GM12878 (cell line): ENCODE measurements at regions of chr1 and their contacts with region 1.

Region 1: DNA sequence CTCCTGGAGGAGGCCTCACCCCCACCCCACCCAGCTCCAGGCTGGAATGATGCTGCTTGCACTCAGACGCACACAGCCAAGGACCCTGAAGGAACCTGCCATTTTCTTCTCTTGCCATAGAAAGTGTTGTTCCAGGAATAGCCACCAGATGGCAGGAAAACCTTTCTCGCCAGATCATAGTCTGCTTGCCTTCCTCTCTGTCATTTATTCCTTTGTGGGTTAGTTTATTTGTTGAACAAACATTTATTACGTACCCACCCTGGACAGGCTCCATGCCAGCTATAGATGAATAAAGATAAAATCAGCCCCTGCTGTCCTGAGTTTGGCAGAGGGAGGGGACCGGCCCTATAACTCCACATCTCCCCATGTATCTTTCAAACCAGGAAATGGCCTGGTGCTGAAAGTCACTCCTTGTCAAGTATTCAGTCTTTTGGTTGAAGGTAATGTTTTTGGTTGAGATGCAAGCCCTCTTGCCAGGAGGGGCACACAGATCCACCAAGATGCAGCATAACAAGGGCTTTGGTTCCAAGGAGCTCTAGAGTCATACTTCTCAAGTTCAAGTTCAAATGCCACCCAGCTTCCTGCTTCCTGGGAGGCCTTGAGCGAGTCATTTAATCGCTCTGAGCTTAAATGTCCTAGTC is 7.0 kb upstream of the KCNC4 start:
- DNase-seq: peak; percentile 17
- ATAC-seq: peak; percentile 84
- H3K4me3 ChIP-seq: no peak overlapping the region
- H3K27ac ChIP-seq: no peak overlapping the region
- H3K4me1 ChIP-seq: no peaks in the 10 kb centered on the region
- H3K27me3 ChIP-seq: peaks cover 0 to 2% of the 10 kb centered on the region in 2 experiments; a peak in 2 of 4 replicates
- CTCF ChIP-seq: peak; percentile 81 to 89 (median 81)
- EP300 ChIP-seq: no peak
- POLR2A ChIP-seq: no peak
- RAD21 ChIP-seq: peak; percentile 90

Region 2: DNA sequence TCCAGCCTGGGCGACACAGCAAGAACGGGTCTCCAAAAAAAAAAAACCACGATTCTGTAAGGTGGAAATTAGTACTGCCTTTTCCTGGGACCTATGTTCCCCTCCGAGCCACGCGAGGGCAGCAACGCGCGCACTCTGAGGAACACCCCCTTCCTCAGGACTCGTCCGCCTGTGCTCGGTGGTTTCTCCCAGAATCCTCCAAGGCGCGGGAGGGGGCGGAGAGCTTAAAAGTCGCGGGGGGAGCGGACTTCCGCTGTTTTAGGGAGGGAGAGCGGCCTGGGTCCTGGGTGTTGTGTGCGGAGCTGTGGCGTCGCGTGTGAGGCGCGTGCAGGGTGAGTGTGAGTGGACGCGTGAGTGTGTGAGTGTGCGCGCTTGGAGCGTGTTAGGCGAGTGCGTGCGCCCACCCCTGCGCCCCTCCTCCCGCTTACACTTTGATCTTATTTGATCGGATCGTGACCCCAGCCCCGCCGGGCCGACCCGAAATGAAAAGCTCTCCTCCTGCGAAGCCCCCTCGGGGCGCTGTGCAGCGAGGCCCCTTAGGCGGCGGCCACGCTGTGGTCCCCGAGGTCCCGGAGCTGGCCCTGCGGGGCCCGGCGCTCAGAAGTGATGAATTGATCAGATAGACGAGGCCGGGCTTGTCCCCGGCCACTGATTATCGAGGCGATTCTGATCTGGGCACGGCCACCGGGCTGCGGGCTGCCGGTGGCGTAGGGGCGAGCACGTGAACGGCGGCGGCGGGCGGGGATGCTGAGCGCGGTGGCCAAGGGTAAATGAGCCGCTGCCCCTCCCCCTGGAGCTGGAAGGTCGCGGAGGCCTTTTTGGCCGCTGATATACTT is 1103.0 kb before region 1 on chr1:
- CTCF ChIA-PET with region 1: no interaction called
- POLR2A ChIA-PET with region 1: no interaction called
- RAD21 ChIA-PET with region 1: no interaction called
- SMC1A ChIA-PET with region 1: no interaction called
- in situ Hi-C with region 1: no loop called
- intact Hi-C with region 1: no loop called
- DNase-seq: peak; percentile 84
- ATAC-seq: peak; percentile 94
- H3K4me3 ChIP-seq: peak overlapping the region; percentile 96
- H3K27ac ChIP-seq: peak overlapping the region; percentile 92
- H3K4me1 ChIP-seq: 0 out of 2 replicates have a peak, but pooled peaks cover 3% of the 10 kb centered on the region
- H3K27me3 ChIP-seq: no peaks in the 10 kb centered on the region
- CTCF ChIP-seq: peak; percentile 88 to 90 (median 89)
- EP300 ChIP-seq: peak in 1 of 2 experiments; percentile 6; a peak in 1 of 4 replicates
- POLR2A ChIP-seq: peak; percentile 100
- RAD21 ChIP-seq: peak; percentile 32; the same call in 1 of the 2 replicates

Region 3: GRCh38 chr1:110068646-110069403 is 134.3 kb before region 1 on chr1:
- CTCF ChIA-PET with region 1: no interaction called
- POLR2A ChIA-PET with region 1: no interaction called
- RAD21 ChIA-PET with region 1: no interaction called
- SMC1A ChIA-PET with region 1: no interaction called
- in situ Hi-C with region 1: no loop called
- intact Hi-C with region 1: no loop called
- DNase-seq: no peak
- ATAC-seq: peak; percentile 47
- H3K4me3 ChIP-seq: no peak overlapping the region
- H3K27ac ChIP-seq: no peak overlapping the region
- H3K4me1 ChIP-seq: no peaks in the 10 kb centered on the region
- H3K27me3 ChIP-seq: peaks cover 28 to 36% of the 10 kb centered on the region in 2 experiments
- CTCF ChIP-seq: no peak
- EP300 ChIP-seq: no peak
- POLR2A ChIP-seq: no peak
- RAD21 ChIP-seq: no peak

Region 4: GRCh38 chr1:110173466-110174117 is 29.5 kb before region 1 on chr1:
- CTCF ChIA-PET with region 1: no interaction called
- POLR2A ChIA-PET with region 1: no interaction called
- RAD21 ChIA-PET with region 1: no interaction called
- SMC1A ChIA-PET with region 1: no interaction called
- in situ Hi-C with region 1: no loop called
- intact Hi-C with region 1: no loop called
- DNase-seq: no peak
- ATAC-seq: no peak
- H3K4me3 ChIP-seq: no peak overlapping the region
- H3K27ac ChIP-seq: no peak overlapping the region
- H3K4me1 ChIP-seq: no peaks in the 10 kb centered on the region
- H3K27me3 ChIP-seq: peaks cover 0 to 2% of the 10 kb centered on the region in 2 experiments; a peak in 3 of 4 replicates
- CTCF ChIP-seq: no peak
- EP300 ChIP-seq: no peak
- POLR2A ChIP-seq: no peak
- RAD21 ChIP-seq: no peak

Region 5: DNA sequence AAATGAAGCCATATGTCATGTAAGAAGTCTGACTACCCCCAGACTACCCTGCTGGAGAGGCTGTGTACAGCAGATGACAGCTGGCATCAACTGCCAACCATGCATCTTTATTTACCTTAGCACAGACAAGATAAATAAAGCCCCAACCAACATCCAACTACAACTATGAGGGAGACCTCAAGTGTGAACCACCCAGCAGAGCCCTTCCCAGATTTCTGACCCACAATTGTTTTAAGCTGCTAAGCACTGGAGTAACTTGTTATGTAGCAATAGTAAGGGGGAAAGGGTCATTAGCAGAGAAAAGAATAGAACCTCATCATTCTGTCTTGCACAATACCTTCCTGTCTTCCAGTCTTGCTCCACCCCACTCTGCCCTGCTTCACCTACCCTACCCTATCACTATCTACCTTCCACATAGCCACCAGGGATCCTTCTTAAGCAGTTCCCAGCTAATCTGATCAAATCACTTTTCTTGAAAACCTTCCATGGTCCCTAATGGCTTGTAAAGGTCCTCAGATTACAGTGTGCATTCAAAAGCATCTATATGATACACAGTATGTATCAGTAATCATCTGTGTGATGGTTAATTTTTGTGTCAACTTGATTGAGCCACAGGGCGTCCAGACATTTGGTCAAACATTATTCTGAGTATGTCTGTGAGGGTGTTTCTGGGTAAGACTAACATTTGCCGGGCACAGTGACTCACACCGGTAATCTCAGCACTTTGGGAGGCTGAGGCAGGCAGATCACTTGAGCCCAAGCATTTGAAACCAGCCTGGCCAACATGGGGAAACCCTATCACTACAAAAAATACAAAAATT is 116.4 kb after region 1 on chr1:
- CTCF ChIA-PET with region 1: interaction called, 753 read pairs
- POLR2A ChIA-PET with region 1: interaction called, 3 read pairs
- RAD21 ChIA-PET with region 1: interaction called, 319 read pairs
- SMC1A ChIA-PET with region 1: interaction called, 524 read pairs
- in situ Hi-C with region 1: no loop called
- intact Hi-C with region 1: no loop called
- DNase-seq: no peak
- ATAC-seq: no peak
- H3K4me3 ChIP-seq: no peak overlapping the region
- H3K27ac ChIP-seq: no peak overlapping the region
- H3K4me1 ChIP-seq: no peaks in the 10 kb centered on the region
- H3K27me3 ChIP-seq: no peaks in the 10 kb centered on the region
- CTCF ChIP-seq: no peak
- EP300 ChIP-seq: no peak
- POLR2A ChIP-seq: no peak
- RAD21 ChIP-seq: no peak

Region 6: GRCh38 chr1:110412576-110412975 is 209.4 kb after region 1 on chr1:
- CTCF ChIA-PET with region 1: interaction called, 89 read pairs
- POLR2A ChIA-PET with region 1: no interaction called
- RAD21 ChIA-PET with region 1: interaction called, 25 read pairs
- SMC1A ChIA-PET with region 1: interaction called, 31 read pairs
- in situ Hi-C with region 1: loop called (anchors 5 kb)
- intact Hi-C with region 1: loop called (anchors 2 kb)
- DNase-seq: peak; percentile 24
- ATAC-seq: peak; percentile 88
- H3K4me3 ChIP-seq: no peak overlapping the region
- H3K27ac ChIP-seq: no peak overlapping the region
- H3K4me1 ChIP-seq: peaks cover 6% of the 10 kb centered on the region
- H3K27me3 ChIP-seq: peaks cover 0 to 2% of the 10 kb centered on the region in 2 experiments; a peak in 2 of 4 replicates
- CTCF ChIP-seq: peak; percentile 80 to 83 (median 83)
- EP300 ChIP-seq: no peak
- POLR2A ChIP-seq: no peak
- RAD21 ChIP-seq: peak; percentile 86

Region 7: GRCh38 chr1:110455151-110455550 is 252.0 kb after region 1 on chr1:
- CTCF ChIA-PET with region 1: interaction called, 122 read pairs
- POLR2A ChIA-PET with region 1: no interaction called
- RAD21 ChIA-PET with region 1: interaction called, 71 read pairs
- SMC1A ChIA-PET with region 1: interaction called, 46 read pairs
- in situ Hi-C with region 1: loop called (anchors 5 kb)
- intact Hi-C with region 1: loop called (anchors 1 kb)
- DNase-seq: no peak
- ATAC-seq: 0 out of 3 replicates have a peak, but pooled peaks have one; percentile 27
- H3K4me3 ChIP-seq: no peak overlapping the region
- H3K27ac ChIP-seq: no peak overlapping the region
- H3K4me1 ChIP-seq: no peaks in the 10 kb centered on the region
- H3K27me3 ChIP-seq: peaks cover 3 to 7% of the 10 kb centered on the region in 2 experiments; a peak in 3 of 4 replicates
- CTCF ChIP-seq: peak in 1 of 3 experiments; percentile 14; a peak in 2 of 6 replicates
- EP300 ChIP-seq: no peak
- POLR2A ChIP-seq: no peak
- RAD21 ChIP-seq: 0 out of 2 replicates have a peak, but pooled peaks have one; percentile 31

Region 8: GRCh38 chr1:110502402-110503151 is 299.4 kb after region 1 on chr1:
- CTCF ChIA-PET with region 1: interaction called, 71 read pairs
- POLR2A ChIA-PET with region 1: no interaction called
- RAD21 ChIA-PET with region 1: interaction called, 4 read pairs
- SMC1A ChIA-PET with region 1: interaction called, 28 read pairs
- in situ Hi-C with region 1: no loop called
- intact Hi-C with region 1: no loop called
- DNase-seq: no peak
- ATAC-seq: peak; percentile 73
- H3K4me3 ChIP-seq: no peak overlapping the region
- H3K27ac ChIP-seq: no peak overlapping the region
- H3K4me1 ChIP-seq: no peaks in the 10 kb centered on the region
- H3K27me3 ChIP-seq: 0 out of 4 replicates have a peak, but pooled peaks cover 0 to 2% of the 10 kb centered on the region in 2 experiments
- CTCF ChIP-seq: no peak
- EP300 ChIP-seq: no peak
- POLR2A ChIP-seq: no peak
- RAD21 ChIP-seq: no peak